ENCODE measurements at regions of chr12 and their contacts with region 1.

Region 1: DNA sequence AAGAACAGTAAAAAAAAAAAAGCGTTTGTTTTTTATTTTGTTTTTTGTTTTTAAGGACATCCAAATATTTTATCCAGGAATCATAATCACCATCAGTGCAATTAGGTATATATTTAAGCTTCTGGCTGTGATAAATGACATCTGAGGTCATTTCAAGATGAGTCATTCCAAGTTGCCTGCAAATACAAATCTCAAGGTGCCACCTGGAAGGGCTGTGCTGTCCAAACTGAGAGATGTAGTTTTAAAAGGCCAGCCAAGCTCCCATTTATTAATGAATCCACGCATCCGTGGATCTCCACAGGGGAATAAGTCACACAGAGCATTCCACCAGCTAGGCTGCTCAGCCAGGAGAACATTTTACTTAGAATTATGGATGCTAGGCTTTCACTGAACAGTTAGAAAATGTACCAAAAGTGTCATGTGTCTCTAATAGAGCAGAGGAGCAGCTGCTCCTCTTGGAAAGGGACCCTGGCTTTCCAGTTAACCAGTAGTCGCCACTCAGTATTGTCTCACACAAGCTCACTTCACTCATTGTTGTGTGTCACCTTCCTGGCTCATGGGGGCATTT is 1151.4 kb upstream of the TMEM132C start:
- DNase-seq: no peak
- ATAC-seq: no peak
- H3K4me3 ChIP-seq: no peak overlapping the region
- H3K27ac ChIP-seq: no peak overlapping the region
- H3K4me1 ChIP-seq: no peaks in the 10 kb centered on the region
- H3K27me3 ChIP-seq: peaks cover 0 to 10% of the 10 kb centered on the region in 2 donors
- CTCF ChIP-seq: no peak

Region 2: GRCh38 chr12:127293507-127294310 is 178.2 kb after region 1 on chr12:
- intact Hi-C with region 1: loop called in 1 of 2 experiments (anchors 10 kb)
- DNase-seq: peak in 2 of 4 donors; percentile 16 to 80
- ATAC-seq: peak; percentile 90
- H3K4me3 ChIP-seq: no peak overlapping the region
- H3K27ac ChIP-seq: no peak overlapping the region
- H3K4me1 ChIP-seq: no peaks in the 10 kb centered on the region
- H3K27me3 ChIP-seq: no peaks in the 10 kb centered on the region
- CTCF ChIP-seq: peak; percentile 45 to 70

Measured in left lung (tissue), 14 donors.